Body of pancreas (tissue), 4 donors: ENCODE measurements at regions of chrX and their contacts with region 1.

Region 1: GRCh38 chrX:40877887-40878286 is 142.5 kb upstream of the MED14 start:
- DNase-seq: peak in 1 of 4 donors; percentile 8
- ATAC-seq: no peak
- H3K4me3 ChIP-seq: no peak overlapping the region
- H3K27ac ChIP-seq: no peak overlapping the region
- H3K4me1 ChIP-seq: no peaks in the 10 kb centered on the region
- H3K27me3 ChIP-seq: no peaks in the 10 kb centered on the region
- CTCF ChIP-seq: peak in 6 of 7 experiments; percentile 22 to 59 (median 46)
- POLR2A ChIP-seq: no peak

Region 2: DNA sequence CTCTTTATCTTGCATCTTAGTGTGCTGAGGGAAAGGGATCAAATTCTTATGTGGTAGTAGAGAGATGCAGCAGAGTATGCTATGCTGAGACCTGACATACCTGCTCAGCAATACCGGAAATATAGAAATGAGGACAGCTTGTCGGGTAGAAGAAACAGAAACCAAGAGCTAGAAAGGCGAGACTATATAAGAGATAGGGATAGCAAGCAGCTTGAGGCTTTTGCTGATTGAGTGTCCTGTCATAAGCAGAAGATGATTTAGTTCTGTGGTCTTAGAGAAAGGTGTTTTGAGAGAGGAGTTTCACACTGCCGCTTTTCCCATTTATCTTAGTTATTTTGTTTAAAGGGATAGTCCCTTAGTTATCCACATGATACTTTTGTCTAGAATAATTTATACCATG is 239.1 kb after region 1 on chrX:
- intact Hi-C with region 1: loop called (anchors 5 kb)
- DNase-seq: no peak
- ATAC-seq: no peak
- H3K4me3 ChIP-seq: no peak overlapping the region
- H3K27ac ChIP-seq: no peak overlapping the region
- H3K4me1 ChIP-seq: peaks cover 19% of the 10 kb centered on the region
- H3K27me3 ChIP-seq: no peaks in the 10 kb centered on the region
- CTCF ChIP-seq: no peak
- POLR2A ChIP-seq: no peak